ENCODE measurements at regions of chr20 and their contacts with region 1.

Region 1: GRCh38 chr20:35146920-35147574 is at the start of gene EDEM2:
- DNase-seq: peak; percentile 98
- H3K4me3 Mint-ChIP-seq: peak within 1 kb of the TSS; percentile 87
- H3K27ac Mint-ChIP-seq: peak within 1 kb of the TSS; percentile 78
- H3K4me1 Mint-ChIP-seq: peaks cover 25% of the 10 kb centered on the region
- H3K27me3 Mint-ChIP-seq: no peaks in the 10 kb centered on the region
- CTCF ChIP-seq: no peak
- total RNA-seq, gene EDEM2: 44.4 and 49.4 TPM in 2 replicates

Region 2: DNA sequence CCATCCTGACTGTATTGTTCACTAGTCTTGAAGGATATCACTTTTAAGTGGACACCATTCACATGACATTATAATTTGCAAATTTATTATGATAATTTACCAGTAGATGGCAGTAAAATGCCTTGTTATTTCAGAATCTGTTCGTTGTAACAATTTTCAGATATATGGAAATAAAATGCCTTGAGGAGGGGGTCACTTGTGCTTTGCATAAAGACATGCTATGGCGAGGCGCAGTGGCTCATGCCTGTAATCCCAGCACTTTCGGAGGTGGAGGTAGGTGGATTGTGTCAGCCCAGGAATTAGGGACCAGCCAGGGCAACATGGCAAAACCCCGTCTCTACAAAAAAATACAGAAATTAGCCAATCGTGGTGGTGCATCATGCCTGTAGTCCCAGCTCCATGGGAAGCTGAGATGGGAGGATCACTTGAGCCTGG is 312.6 kb before region 1 on chr20:
- CTCF ChIA-PET with region 1: no interaction called
- intact Hi-C with region 1: loop called (anchors 5 kb)
- DNase-seq: no peak
- H3K4me3 Mint-ChIP-seq: peak overlapping the region; percentile 47
- H3K27ac Mint-ChIP-seq: no peak overlapping the region
- H3K4me1 Mint-ChIP-seq: no peaks in the 10 kb centered on the region
- H3K27me3 Mint-ChIP-seq: peaks cover 44% of the 10 kb centered on the region
- CTCF ChIP-seq: peak; percentile 15

Region 3: DNA sequence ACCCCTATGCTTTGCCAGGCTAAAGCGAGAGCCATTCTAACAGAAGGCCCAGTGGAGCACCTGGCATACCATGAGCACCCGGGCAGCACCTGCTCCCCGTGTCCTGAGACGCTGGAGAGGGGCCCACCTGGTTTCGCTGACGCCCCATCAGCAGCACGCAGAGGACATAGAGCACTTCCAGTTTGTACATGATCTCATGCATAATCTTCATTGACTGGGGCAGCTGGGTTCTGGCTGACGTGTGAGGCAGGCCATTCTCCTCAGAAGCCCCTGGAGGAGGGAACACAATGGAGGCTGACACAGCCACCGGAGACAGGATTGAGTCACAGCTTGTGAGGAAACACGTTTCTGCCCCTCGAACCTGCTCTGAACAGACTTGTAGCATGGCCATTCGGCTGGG is 126.0 kb before region 1 on chr20:
- CTCF ChIA-PET with region 1: no interaction called
- intact Hi-C with region 1: no loop called
- DNase-seq: no peak
- H3K4me3 Mint-ChIP-seq: no peak overlapping the region
- H3K27ac Mint-ChIP-seq: no peak overlapping the region
- H3K4me1 Mint-ChIP-seq: no peaks in the 10 kb centered on the region
- H3K27me3 Mint-ChIP-seq: no peaks in the 10 kb centered on the region
- CTCF ChIP-seq: no peak

Region 4: GRCh38 chr20:35192111-35192872 is 45.2 kb after region 1 on chr20:
- CTCF ChIA-PET with region 1: interaction called, 18 read pairs
- intact Hi-C with region 1: no loop called
- DNase-seq: peak; percentile 29
- H3K4me3 Mint-ChIP-seq: no peak overlapping the region
- H3K27ac Mint-ChIP-seq: peak overlapping the region; percentile 52
- H3K4me1 Mint-ChIP-seq: peaks cover 68% of the 10 kb centered on the region
- H3K27me3 Mint-ChIP-seq: no peaks in the 10 kb centered on the region
- CTCF ChIP-seq: no peak

Region 5: DNA sequence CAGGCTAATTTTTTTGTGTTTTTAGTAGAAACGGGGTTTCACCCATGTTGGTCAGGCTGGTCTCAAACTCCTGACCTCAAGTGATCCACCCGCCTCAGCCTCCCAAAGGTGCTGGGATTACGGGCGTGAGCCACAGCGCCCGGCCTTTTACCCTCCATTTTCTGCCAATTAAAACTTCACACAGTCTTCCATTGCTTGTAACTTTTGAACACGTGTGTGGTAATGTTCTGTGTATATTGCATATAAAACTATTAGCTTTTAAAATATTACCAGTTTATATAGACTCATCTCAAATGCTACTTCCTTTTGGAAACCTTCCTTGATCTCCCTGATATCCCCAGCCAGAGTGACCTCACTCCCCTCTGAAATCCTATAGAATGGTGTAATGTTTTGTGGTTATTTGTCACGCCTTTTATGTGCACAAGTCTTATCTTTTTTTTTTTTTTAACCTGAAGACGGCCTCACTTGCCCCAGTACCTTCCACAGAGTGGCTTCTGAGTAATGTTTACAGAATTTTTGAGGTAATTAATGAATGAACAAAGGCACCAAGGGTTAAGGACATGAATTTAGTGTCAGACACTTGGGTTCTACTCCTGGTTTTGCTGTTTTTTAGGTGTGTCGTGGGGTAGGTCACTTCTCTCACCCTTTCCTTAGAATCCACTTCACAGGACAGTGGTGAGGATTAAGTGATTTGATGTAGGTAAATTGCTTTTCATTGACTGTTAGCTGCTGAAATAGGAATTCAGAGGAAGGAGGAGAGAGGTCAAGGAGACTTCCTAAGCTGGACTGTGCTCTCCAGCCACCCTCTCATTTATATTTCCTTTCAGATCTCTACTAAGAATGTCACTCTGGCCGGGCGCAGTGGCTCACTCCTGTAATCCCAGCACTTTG is 68.3 kb after region 1 on chr20:
- CTCF ChIA-PET with region 1: interaction called, 86 read pairs
- intact Hi-C with region 1: no loop called
- DNase-seq: peak; percentile 62
- H3K4me3 Mint-ChIP-seq: no peak overlapping the region
- H3K27ac Mint-ChIP-seq: peak overlapping the region; percentile 84
- H3K4me1 Mint-ChIP-seq: peaks cover 31% of the 10 kb centered on the region
- H3K27me3 Mint-ChIP-seq: no peaks in the 10 kb centered on the region
- CTCF ChIP-seq: no peak

Region 6: DNA sequence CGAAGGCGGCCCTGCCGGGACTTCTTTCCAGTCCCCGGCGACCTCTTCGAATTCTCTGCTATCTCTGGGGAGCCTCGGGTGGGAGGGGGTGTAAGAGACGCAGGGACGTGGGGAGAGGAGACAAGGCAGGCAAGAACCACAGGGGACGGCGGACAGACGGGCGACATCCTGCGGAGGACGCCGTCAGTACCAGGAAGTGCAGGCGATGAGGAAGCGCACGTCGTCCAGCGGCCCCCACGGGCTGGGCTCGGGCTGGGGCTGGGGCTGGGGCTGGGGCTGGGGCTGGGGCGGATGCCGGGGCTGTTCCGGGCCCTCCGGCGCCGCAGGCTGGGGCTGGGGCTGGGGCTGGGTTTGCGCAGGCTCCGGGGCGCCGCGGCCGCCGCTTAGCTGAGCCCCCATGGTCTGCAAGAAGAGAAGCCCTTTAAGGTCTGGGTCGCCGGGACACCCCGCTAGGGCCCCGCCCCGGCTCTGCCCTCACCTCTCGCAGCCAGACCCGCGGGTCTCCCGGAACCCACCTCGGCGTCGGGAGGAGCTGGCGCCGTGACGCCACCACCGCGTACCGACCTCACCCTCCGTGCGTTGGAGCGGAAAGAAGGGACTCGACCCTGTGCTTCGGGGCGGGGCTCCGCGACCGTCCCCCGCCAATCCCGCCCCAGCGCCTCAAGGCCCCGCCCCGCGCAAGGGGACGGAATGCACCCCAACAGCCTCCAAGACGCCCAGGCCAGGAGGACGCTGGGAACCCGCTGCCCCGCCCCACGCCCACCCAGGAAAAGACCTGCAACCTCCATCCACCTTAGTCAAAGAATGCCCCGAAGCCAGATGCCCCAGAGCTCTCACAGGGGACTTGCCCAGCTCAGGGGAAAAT is 130.7 kb after region 1 on chr20 and contains the start of gene MMP24OS:
- CTCF ChIA-PET with region 1: interaction called, 50 read pairs
- intact Hi-C with region 1: no loop called
- DNase-seq: peak; percentile 98
- H3K4me3 Mint-ChIP-seq: peak within 1 kb of the TSS; percentile 85
- H3K27ac Mint-ChIP-seq: peak within 1 kb of the TSS; percentile 95
- H3K4me1 Mint-ChIP-seq: peaks cover 25% of the 10 kb centered on the region
- H3K27me3 Mint-ChIP-seq: no peaks in the 10 kb centered on the region
- CTCF ChIP-seq: peak; percentile 17
- total RNA-seq, gene MMP24OS: 86.8 and 95.4 TPM in 2 replicates

Region 7: DNA sequence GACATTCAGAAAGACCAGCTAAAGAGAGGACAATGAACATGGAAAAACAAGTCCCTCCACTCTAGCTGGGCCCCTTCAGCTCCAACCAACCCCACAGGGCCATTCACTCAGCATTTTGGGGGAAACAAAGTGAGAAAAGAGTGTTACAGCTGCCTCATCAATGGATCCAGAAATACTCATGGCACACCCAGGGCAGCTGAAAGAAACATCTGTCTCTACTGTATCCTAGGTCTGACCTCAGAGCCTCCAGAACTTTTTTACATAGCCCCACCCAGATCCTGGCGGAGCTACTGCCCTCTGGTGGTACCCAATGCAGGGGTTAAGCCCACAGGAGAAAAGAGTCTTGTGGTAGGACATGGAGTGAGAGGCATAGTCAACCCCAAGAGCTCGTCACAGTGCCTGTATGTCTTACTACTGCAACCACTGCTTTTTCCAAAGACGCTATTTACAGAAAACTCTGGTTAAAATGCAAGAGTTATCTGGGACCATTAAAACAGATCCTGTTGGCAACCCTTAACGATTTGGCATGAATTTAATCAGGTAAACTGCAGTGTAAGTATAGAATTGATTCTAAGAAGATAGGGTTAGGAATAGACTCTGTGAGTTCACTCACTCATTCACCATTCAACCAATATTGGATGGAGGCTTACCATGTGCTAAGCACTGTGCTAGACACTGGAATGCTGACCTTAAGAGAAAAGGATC is 182.5 kb after region 1 on chr20:
- CTCF ChIA-PET with region 1: interaction called, 10 read pairs
- intact Hi-C with region 1: no loop called
- DNase-seq: peak; percentile 84
- H3K4me3 Mint-ChIP-seq: no peak overlapping the region
- H3K27ac Mint-ChIP-seq: peak overlapping the region; percentile 34
- H3K4me1 Mint-ChIP-seq: peaks cover 54% of the 10 kb centered on the region
- H3K27me3 Mint-ChIP-seq: no peaks in the 10 kb centered on the region
- CTCF ChIP-seq: peak; percentile 87